Naive thymus-derived CD4-positive, alpha-beta T cell (primary cell): ENCODE measurements at regions of chr6 and their contacts with region 1.

Region 1: GRCh38 chr6:8831366-8832152 is 396.2 kb upstream of the SLC35B3 start:
- DNase-seq: no peak
- ATAC-seq: no peak
- H3K4me3 ChIP-seq: no peak overlapping the region
- H3K4me3 Mint-ChIP-seq: no peak overlapping the region
- H3K27ac ChIP-seq: no peak overlapping the region
- H3K27ac Mint-ChIP-seq: no peak overlapping the region
- H3K4me1 ChIP-seq: no peaks in the 10 kb centered on the region
- H3K4me1 Mint-ChIP-seq: no peaks in the 10 kb centered on the region
- H3K27me3 ChIP-seq: no peaks in the 10 kb centered on the region
- H3K27me3 Mint-ChIP-seq: no peaks in the 10 kb centered on the region

Region 2: DNA sequence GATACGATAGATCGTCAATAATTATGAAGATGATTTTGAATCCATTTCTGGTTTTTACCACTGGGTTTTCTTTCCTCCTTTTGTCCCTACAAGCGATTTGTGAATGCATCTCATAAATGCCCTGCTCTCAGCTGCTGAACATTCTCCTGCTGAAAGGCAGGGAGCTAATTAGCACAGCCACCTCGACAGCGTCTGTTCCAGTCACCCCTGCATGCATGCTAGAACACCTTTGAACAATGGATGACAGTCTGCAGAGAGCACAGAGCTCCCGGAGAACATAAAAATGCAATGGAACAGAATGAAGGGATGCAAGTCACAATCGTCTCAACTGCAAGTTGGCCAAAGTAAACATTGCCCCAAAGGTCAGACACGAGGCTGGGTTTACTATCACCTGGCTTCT is 502.0 kb before region 1 on chr6:
- CTCF ChIA-PET with region 1: interaction called, 10 read pairs
- POLR2A ChIA-PET with region 1: no interaction called
- intact Hi-C with region 1: no loop called
- DNase-seq: no peak
- ATAC-seq: no peak
- H3K4me3 ChIP-seq: no peak overlapping the region
- H3K4me3 Mint-ChIP-seq: no peak overlapping the region
- H3K27ac ChIP-seq: no peak overlapping the region
- H3K27ac Mint-ChIP-seq: no peak overlapping the region
- H3K4me1 ChIP-seq: no peaks in the 10 kb centered on the region
- H3K4me1 Mint-ChIP-seq: no peaks in the 10 kb centered on the region
- H3K27me3 ChIP-seq: no peaks in the 10 kb centered on the region
- H3K27me3 Mint-ChIP-seq: peaks cover 0 to 13% (median 6%) of the 10 kb centered on the region in 5 donors